B cell (primary cell): ENCODE measurements at regions of chr12 and their contacts with region 1.

Region 1: DNA sequence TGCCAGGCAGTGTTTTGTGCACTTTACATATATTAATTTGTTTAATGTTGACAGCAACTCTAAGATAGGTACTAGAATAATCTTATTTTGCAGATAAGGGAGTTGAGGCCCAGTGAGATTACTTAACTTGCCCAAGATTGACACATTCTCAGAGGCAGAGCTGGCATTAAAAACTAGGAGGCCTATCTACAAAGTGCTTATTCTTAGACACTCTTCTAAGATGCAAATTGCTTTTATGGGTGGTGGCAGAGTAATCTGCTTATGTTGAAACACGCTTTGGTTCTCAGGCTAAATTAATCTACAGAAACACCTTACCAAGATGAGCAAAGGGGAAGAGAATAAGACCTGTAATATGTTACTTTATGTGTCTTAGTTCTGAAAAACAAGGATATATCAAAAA is 7.2 kb downstream of the MGP start:
- DNase-seq: no peak
- ATAC-seq: no peak
- H3K4me3 ChIP-seq: no peak overlapping the region
- H3K4me3 Mint-ChIP-seq: no peak overlapping the region
- H3K27ac ChIP-seq: no peak overlapping the region
- H3K27ac Mint-ChIP-seq: no peak overlapping the region
- H3K4me1 ChIP-seq: peaks cover 6 to 14% of the 10 kb centered on the region in 2 donors
- H3K4me1 Mint-ChIP-seq: peaks cover 19% of the 10 kb centered on the region
- H3K27me3 ChIP-seq: no peaks in the 10 kb centered on the region
- H3K27me3 Mint-ChIP-seq: no peaks in the 10 kb centered on the region
- CTCF ChIP-seq: no peak

Region 2: DNA sequence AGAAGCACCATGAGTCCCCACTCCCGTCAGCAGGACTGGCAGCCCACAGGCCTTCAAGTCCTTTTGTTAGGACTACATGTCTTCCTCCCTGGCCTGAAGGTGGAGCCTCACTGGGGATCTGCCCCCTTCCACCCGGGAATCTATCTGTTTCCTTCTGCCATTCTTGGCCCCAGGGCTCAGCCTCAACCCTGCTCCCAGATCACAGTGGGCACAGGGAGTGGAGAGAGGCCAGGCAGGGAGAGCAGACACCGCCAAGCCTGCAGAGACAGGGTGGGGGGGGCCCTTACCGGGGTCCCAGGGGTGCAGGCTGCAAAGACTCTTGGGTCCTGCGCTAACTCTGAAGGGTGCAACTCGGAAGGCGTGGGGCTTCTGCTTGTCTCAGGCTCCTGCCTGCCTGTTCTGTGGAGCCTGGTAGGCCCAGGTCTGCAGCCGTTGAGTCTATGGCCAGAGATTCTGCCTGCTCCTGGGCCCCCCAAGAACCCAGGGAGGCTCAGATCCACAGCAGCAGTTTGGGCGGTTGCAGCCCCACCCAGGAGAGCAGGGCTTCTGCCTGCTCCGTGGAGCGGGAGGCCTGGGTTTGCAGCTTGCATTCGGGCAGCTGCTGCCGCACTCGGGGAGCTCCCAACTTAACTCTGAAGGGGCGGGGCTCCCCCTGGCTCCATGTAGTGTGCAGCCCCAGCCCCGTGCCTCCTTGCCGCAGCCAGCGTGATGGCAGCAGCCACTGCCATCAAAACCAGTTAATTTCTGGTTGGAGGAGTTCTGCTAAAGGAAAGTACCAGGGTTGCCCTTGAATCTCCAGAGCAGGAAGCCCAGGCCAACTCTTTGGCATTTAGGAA is 289.1 kb before region 1 on chr12:
- CTCF ChIA-PET with region 1: no interaction called
- POLR2A ChIA-PET with region 1: no interaction called
- intact Hi-C with region 1: no loop called
- DNase-seq: no peak
- ATAC-seq: no peak
- H3K4me3 ChIP-seq: no peak overlapping the region
- H3K4me3 Mint-ChIP-seq: no peak overlapping the region
- H3K27ac ChIP-seq: no peak overlapping the region
- H3K27ac Mint-ChIP-seq: no peak overlapping the region
- H3K4me1 ChIP-seq: no peaks in the 10 kb centered on the region
- H3K4me1 Mint-ChIP-seq: no peaks in the 10 kb centered on the region
- H3K27me3 ChIP-seq: no peaks in the 10 kb centered on the region
- H3K27me3 Mint-ChIP-seq: no peaks in the 10 kb centered on the region
- CTCF ChIP-seq: no peak

Region 3: DNA sequence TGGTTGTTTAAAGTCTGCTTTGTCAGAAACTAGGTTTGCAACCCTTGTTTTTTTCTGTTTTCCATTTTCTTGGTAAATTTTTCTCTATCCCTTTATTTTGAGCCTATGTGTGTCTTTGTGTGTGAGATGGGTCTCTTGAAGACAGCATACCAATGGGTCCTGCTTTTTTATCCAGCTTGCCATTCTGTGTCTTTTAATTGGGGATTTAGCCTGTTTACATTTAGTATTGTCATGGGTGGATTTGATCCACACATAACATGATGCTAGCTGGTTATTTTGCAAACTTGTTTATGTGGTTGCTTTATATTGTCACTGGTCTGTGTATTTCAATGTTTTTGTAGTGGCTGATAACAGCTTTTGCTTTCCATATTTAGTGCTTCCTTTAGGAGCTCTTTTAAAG is 18.0 kb before region 1 on chr12:
- CTCF ChIA-PET with region 1: interaction called, 3 read pairs
- POLR2A ChIA-PET with region 1: no interaction called
- intact Hi-C with region 1: loop called (anchors 1 kb)
- DNase-seq: no peak
- ATAC-seq: no peak
- H3K4me3 ChIP-seq: no peak overlapping the region
- H3K4me3 Mint-ChIP-seq: no peak overlapping the region
- H3K27ac ChIP-seq: no peak overlapping the region
- H3K27ac Mint-ChIP-seq: no peak overlapping the region
- H3K4me1 ChIP-seq: peaks cover 8 to 15% of the 10 kb centered on the region in 2 donors
- H3K4me1 Mint-ChIP-seq: peaks cover 24% of the 10 kb centered on the region
- H3K27me3 ChIP-seq: no peaks in the 10 kb centered on the region
- H3K27me3 Mint-ChIP-seq: no peaks in the 10 kb centered on the region
- CTCF ChIP-seq: no peak